AG04450 (cell line): ENCODE measurements at regions of chr19 and their contacts with region 1.

Region 1: GRCh38 chr19:19404879-19405860 is at the start of gene GATAD2A:
- DNase-seq: peak; percentile 79
- H3K4me3 ChIP-seq: peak within 1 kb of the TSS; percentile 71
- H3K27ac ChIP-seq: peak within 1 kb of the TSS; percentile 88
- H3K27me3 ChIP-seq: no peaks in the 10 kb centered on the region
- CTCF ChIP-seq: peak; percentile 15; the same call in 1 of the 2 replicates
- polyA plus RNA-seq, gene GATAD2A: 22.0 and 23.4 TPM in 2 replicates

Region 2: GRCh38 chr19:19385108-19385899 is 19.9 kb before region 1 on chr19:
- CTCF ChIA-PET with region 1: interaction called, 3 read pairs
- POLR2A ChIA-PET with region 1: interaction called, 11 read pairs
- DNase-seq: peak; percentile 99
- H3K4me3 ChIP-seq: peak overlapping the region; percentile 75
- H3K27ac ChIP-seq: peak overlapping the region; percentile 57
- H3K27me3 ChIP-seq: no peaks in the 10 kb centered on the region
- CTCF ChIP-seq: peak; percentile 28

Region 3: GRCh38 chr19:19420570-19421298 is 15.6 kb after region 1 on chr19:
- CTCF ChIA-PET with region 1: no interaction called
- POLR2A ChIA-PET with region 1: interaction called, 11 read pairs
- DNase-seq: no peak
- H3K4me3 ChIP-seq: no peak overlapping the region
- H3K27ac ChIP-seq: no peak overlapping the region
- H3K27me3 ChIP-seq: no peaks in the 10 kb centered on the region
- CTCF ChIP-seq: no peak

Region 4: GRCh38 chr19:19488875-19489690 is 83.9 kb after region 1 on chr19:
- CTCF ChIA-PET with region 1: interaction called, 26 read pairs
- POLR2A ChIA-PET with region 1: interaction called, 8 read pairs
- DNase-seq: peak; percentile 69
- H3K4me3 ChIP-seq: peak overlapping the region; percentile 25
- H3K27ac ChIP-seq: peak overlapping the region; percentile 90
- H3K27me3 ChIP-seq: no peaks in the 10 kb centered on the region
- CTCF ChIP-seq: no peak

Region 5: DNA sequence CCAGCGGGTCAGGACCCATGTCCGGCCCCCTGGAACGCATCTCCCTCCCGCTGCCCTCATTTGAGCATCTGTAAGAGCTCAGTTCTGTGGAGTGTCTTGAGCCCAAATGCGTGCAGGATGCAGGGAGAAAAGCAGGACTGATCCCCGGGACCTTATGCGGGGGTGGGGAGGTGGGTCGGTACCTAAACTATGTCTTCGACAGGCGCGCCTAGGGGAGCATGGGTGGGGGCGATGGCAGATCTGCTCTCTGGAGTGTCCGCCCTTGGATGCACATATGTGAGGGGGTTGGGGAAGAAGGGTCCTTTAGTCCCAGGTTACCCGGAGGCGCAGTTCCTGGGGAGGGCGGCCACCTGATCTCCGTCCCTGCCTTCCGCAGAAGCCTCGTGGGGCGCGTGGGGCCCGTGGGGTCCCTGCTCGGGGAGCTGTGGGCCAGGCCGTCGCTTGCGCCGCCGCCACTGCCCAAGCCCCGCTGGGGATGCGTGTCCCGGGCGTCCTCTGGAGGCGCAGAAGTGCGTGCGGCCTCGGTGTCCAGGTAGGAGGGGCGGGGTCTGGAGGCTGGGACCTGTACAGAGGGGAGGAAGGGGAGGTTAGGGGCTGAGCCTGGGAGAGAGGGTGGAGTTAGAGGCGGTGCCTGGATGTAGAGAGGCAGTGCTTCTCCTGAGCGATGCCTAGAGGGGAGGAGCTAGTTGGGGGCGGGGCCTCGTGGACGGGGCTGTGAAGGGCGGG is 135.7 kb after region 1 on chr19:
- CTCF ChIA-PET with region 1: no interaction called
- POLR2A ChIA-PET with region 1: no interaction called
- DNase-seq: no peak
- H3K4me3 ChIP-seq: peak overlapping the region; percentile 18; the same call in 1 of the 2 replicates
- H3K27ac ChIP-seq: no peak overlapping the region
- H3K27me3 ChIP-seq: peaks cover 26% of the 10 kb centered on the region
- CTCF ChIP-seq: no peak